ENCODE measurements at regions of chr2 and their contacts with region 1.

Region 1: DNA sequence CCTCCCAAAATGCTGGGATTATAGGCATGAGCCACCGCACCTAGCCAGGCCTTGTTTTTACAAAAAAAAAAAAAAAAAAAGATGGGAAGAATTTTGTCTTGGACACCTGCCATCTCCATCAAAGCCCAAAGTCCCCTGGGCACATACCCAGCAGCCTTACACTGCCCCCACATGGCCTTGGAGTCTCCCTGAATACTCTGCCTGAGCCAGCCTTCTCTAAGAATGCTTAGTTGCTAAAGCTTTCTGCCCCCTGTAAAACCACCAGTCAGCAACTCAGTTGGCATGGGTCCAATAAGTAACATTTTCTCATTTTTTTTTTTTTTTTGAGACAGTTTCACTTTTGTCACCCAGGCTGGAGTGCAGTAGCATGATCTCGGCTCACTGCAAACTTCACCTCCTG is 40.6 kb downstream of the SPC25 start:
- DNase-seq: no peak
- H3K4me3 ChIP-seq: no peak overlapping the region
- H3K27ac ChIP-seq: no peak overlapping the region
- H3K4me1 ChIP-seq: peaks cover 7% of the 10 kb centered on the region
- H3K27me3 ChIP-seq: no peaks in the 10 kb centered on the region
- CTCF ChIP-seq: peak; percentile 14 to 22

Region 2: DNA sequence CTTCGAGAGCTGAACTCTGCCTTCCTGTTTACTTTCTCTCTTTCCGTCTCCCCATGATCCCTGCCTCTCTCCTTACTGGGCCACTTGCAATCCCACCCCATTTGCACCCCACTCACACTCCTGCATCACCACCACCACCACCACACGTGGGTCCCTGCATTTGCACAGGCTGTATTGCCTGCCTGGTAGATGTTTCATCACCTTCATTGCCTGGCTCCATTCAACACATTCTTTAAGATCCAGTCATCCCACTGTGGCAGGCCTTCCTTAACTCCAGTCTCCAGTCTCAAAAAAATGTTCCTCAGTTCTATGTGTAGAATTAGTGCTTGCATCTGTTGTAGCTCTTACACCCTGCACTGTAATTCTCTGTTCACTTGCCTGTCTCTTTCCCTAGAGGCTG is 33.2 kb before region 1 on chr2:
- CTCF ChIA-PET with region 1: no interaction called
- dilution Hi-C with region 1: no loop called
- in situ Hi-C with region 1: no loop called
- intact Hi-C with region 1: no loop called
- DNase-seq: peak; percentile 61
- H3K4me3 ChIP-seq: no peak overlapping the region
- H3K27ac ChIP-seq: no peak overlapping the region
- H3K4me1 ChIP-seq: peaks cover 7% of the 10 kb centered on the region
- H3K27me3 ChIP-seq: no peaks in the 10 kb centered on the region
- CTCF ChIP-seq: no peak

Region 3: DNA sequence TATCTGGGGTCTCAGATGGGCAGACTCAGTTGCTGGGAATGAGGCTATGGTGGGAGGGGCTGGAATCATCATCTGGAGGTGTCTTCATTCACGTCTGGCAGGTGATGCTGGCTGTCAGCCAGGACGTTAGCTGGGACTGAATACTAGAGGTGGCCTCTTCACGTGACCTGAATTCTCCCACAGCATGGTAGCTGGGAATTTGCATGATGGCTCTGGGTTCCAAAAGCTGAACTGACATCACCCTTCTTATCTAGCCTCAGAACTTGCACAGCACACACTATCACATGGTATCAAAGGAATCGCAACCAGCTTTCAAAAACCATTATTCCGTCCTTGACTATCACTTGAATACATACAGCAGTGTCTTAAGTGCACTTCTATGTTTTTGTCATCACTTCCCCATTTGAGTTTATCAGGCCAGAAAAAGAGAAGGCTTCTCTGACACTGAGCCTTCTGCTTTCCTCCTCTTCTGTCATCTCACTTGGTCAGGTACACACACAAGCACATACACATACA is 565.7 kb after region 1 on chr2:
- CTCF ChIA-PET with region 1: interaction called, 10 read pairs
- dilution Hi-C with region 1: no loop called
- in situ Hi-C with region 1: no loop called
- intact Hi-C with region 1: no loop called
- DNase-seq: no peak
- H3K4me3 ChIP-seq: no peak overlapping the region
- H3K27ac ChIP-seq: no peak overlapping the region
- H3K4me1 ChIP-seq: no peaks in the 10 kb centered on the region
- H3K27me3 ChIP-seq: peaks cover 7% of the 10 kb centered on the region
- CTCF ChIP-seq: no peak